ENCODE measurements at regions of chr2 and their contacts with region 1.

Region 1: DNA sequence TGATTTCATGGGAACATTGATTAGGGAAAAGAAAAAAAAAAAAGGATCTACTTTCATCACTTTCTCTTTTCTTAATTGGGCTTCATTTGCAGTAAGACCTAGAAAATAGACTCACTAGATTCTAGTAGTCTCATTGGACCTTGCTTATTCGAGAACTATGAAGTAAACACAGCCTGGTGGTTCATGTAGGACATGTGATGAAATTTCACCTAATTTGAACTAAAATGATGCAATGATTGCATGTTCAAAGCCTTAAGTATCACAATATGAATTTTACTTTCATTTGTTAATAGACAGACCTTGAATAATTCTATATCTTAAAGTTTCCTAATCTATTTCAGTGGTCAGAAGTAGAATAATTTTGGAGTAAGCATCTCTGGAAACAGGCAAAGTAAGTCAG is 688.9 kb upstream of the NRXN1 start:
- DNase-seq: no peak
- H3K4me3 ChIP-seq: no peak overlapping the region
- H3K27ac ChIP-seq: no peak overlapping the region
- H3K4me1 ChIP-seq: peaks cover 0 to 12% (median 6%) of the 10 kb centered on the region in 4 donors
- H3K27me3 ChIP-seq: no peaks in the 10 kb centered on the region
- CTCF ChIP-seq: no peak
- EP300 ChIP-seq: no peak
- POLR2A ChIP-seq: no peak

Region 2: GRCh38 chr2:50620783-50621182 is 1100.0 kb before region 1 on chr2:
- in situ Hi-C with region 1: no loop called
- intact Hi-C with region 1: no loop called
- DNase-seq: no peak
- H3K4me3 ChIP-seq: no peak overlapping the region
- H3K27ac ChIP-seq: no peak overlapping the region
- H3K4me1 ChIP-seq: no peaks in the 10 kb centered on the region
- H3K27me3 ChIP-seq: no peaks in the 10 kb centered on the region
- CTCF ChIP-seq: no peak
- EP300 ChIP-seq: no peak
- POLR2A ChIP-seq: no peak

Region 3: DNA sequence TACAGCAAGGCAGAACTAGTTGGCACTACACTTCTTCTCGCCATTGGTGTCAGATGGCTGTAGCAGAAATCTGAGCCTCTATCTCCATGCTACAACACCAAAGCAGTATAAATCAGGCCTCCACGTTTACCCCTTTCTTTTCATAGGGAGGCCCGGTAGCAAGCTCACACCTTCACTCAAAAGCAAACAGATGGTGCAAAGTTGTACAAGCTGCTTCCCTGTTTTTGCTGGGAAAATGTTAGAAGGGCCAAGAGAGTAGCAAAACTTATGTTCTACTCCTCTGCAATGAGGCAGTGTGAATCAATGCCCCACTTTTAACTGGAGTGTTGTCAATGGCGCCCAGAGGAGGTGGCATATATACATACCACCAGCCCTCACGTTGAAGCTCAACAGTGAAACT is 319.3 kb before region 1 on chr2:
- in situ Hi-C with region 1: no loop called
- intact Hi-C with region 1: no loop called
- DNase-seq: no peak
- H3K4me3 ChIP-seq: no peak overlapping the region
- H3K27ac ChIP-seq: no peak overlapping the region
- H3K4me1 ChIP-seq: no peaks in the 10 kb centered on the region
- H3K27me3 ChIP-seq: no peaks in the 10 kb centered on the region
- CTCF ChIP-seq: no peak
- EP300 ChIP-seq: no peak
- POLR2A ChIP-seq: no peak

Region 4: GRCh38 chr2:51695531-51695930 is 25.3 kb before region 1 on chr2:
- in situ Hi-C with region 1: no loop called
- intact Hi-C with region 1: loop called (anchors 2 kb)
- DNase-seq: no peak
- H3K4me3 ChIP-seq: no peak overlapping the region
- H3K27ac ChIP-seq: no peak overlapping the region
- H3K4me1 ChIP-seq: peaks cover 0 to 18% (median 6%) of the 10 kb centered on the region in 4 donors
- H3K27me3 ChIP-seq: no peaks in the 10 kb centered on the region
- CTCF ChIP-seq: no peak
- EP300 ChIP-seq: no peak
- POLR2A ChIP-seq: no peak

Measured in transverse colon (tissue), 4 donors.